Activated CD4-positive, alpha-beta T cell treated with anti-CD3 and anti-CD28 coated beads for 36 hours (primary cell): ENCODE measurements at regions of chr22 and their contacts with region 1.

Region 1: DNA sequence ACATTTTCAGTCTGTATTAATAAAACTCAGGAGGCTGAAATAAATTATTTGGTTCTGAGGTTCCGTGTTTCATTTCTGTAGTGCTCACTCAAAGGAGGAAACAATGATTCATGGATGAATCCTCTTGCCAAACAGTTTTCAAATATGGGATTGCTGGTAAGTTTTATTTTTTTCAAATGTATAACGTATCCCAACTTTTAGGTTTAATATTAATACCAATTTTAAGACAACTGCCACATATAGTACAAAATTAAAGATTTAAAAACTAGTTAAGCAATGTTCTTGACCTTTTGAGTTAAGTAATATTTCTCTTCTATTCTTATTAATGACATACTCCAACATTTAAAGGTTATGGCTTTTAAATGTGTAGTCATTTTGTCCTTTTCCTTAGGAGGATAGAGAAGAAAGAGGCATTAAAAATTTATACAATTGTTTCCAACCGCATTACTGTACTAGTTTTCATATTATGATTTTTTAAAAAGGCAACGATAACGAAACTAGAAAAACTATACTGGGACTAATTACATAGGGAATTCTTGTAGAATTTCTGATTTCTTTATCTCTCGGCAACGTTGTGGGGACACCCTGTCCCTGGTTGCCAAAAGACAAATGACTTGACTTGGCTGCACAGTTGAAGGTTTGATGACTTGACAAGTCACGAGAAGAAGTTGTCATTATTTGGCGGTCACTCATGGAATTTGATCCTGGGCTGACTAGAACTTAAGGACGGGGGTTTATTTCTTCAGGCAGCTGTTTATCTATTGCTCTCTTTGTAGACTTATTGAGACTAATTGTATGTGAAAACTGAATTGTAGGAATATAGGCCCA is 69.1 kb upstream of the ADSL start:
- DNase-seq: no peak
- ATAC-seq: peak; percentile 31
- H3K4me3 Mint-ChIP-seq: no peak overlapping the region
- H3K27ac Mint-ChIP-seq: peak overlapping the region; percentile 68
- H3K4me1 Mint-ChIP-seq: peaks cover 47% of the 10 kb centered on the region
- H3K27me3 Mint-ChIP-seq: no peaks in the 10 kb centered on the region

Region 2: DNA sequence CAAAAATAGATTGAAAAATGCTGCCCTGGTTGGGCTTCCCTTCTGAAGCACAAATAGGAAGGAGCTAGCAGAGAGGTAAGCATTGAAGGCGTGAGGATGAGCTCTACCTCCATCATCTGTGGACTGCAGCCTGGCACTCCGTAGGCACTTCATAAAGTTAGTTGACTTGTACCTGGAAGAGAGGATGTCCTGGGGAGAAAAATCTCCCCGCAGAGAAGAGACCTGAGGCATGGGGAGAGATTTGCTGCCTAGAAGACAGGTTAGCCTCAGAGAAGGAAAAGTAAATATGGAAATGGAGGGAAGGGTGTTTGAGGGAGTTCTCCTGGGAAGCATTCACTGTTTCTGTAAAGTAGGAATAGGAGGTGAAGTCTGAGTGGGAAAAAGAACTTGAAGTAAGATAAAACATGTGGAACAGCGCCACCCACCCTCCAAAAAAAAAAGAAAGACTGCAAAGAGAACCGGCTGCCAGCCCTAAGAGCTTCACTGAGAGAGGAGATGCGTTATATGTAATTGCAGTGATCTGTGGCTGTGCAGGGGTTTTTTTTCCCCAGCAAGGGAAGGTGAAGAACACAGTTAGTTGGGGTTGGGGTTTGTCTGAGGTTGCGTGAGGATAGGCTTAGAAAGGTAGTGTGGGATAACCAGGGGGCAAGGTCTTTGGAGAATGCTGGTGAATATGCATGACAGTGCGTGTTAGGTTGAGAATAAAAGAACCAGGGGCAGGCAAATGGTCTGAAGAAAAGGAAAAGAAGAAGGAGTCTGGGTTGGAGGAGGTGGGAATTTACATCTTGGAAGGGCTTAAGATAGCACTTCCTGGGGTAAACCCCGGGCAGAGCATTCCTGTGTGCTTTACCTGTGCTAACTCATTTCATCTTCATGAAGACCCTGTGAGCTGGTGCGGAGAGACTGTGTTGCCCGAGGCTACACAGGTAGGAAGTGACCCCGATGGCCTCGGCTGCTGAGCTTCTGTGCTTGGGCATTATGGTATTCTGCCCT is 83.5 kb before region 1 on chr22:
- CTCF ChIA-PET with region 1: interaction called, 3 read pairs
- POLR2A ChIA-PET with region 1: no interaction called
- intact Hi-C with region 1: loop called in 1 of 2 experiments (anchors 1 kb)
- DNase-seq: no peak
- ATAC-seq: no peak
- H3K4me3 Mint-ChIP-seq: no peak overlapping the region
- H3K27ac Mint-ChIP-seq: peak overlapping the region; percentile 72
- H3K4me1 Mint-ChIP-seq: peaks cover 86% of the 10 kb centered on the region
- H3K27me3 Mint-ChIP-seq: no peaks in the 10 kb centered on the region

Region 3: DNA sequence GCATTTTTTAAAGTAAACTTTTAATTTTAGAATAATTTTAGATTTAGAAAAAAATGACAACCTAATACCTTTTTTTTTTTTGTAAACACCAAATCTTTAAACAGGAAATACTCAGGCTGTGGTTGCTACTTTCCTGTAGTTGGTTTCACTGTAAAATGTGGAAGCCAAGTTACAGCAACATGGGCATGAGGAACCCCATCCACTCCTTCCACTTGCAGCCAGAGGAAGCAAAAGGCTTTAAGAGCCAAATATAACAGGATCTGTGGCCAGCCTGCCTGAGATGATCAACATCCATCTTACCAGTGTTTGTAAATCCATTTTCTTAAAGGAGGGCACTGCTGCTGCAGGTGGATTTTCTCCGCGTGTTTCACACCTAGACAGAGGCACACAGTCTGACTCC is 33.3 kb before region 1 on chr22:
- CTCF ChIA-PET with region 1: interaction called, 3 read pairs
- POLR2A ChIA-PET with region 1: no interaction called
- intact Hi-C with region 1: loop called in 1 of 2 experiments (anchors 5 kb)
- DNase-seq: no peak
- ATAC-seq: no peak
- H3K4me3 Mint-ChIP-seq: no peak overlapping the region
- H3K27ac Mint-ChIP-seq: peak overlapping the region; percentile 59
- H3K4me1 Mint-ChIP-seq: peaks cover 78% of the 10 kb centered on the region
- H3K27me3 Mint-ChIP-seq: no peaks in the 10 kb centered on the region

Region 4: DNA sequence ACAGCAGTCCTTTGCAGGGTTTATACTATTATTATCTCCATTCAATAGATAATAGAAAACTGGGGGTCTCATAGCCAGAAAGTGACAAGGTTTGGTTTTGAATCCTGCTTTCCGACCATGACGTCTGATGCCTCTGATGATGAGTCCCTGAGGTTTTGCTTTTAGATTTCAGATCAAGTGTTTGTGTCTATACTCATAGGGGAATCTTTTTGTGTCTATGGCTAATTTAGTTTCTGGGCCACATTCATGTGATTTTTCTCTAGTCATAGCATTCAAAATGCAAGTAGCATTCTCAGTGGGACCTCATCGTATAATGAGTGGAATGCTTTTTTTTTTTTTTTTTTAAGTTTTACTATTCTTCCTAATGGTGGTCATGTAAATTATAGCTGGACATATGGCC is 26.6 kb before region 1 on chr22:
- CTCF ChIA-PET with region 1: no interaction called
- POLR2A ChIA-PET with region 1: interaction called, 13 read pairs
- intact Hi-C with region 1: loop called in 1 of 2 experiments (anchors 1 kb)
- DNase-seq: peak; percentile 66
- ATAC-seq: peak; percentile 86
- H3K4me3 Mint-ChIP-seq: no peak overlapping the region
- H3K27ac Mint-ChIP-seq: peak overlapping the region; percentile 69
- H3K4me1 Mint-ChIP-seq: peaks cover 71% of the 10 kb centered on the region
- H3K27me3 Mint-ChIP-seq: no peaks in the 10 kb centered on the region

Region 5: DNA sequence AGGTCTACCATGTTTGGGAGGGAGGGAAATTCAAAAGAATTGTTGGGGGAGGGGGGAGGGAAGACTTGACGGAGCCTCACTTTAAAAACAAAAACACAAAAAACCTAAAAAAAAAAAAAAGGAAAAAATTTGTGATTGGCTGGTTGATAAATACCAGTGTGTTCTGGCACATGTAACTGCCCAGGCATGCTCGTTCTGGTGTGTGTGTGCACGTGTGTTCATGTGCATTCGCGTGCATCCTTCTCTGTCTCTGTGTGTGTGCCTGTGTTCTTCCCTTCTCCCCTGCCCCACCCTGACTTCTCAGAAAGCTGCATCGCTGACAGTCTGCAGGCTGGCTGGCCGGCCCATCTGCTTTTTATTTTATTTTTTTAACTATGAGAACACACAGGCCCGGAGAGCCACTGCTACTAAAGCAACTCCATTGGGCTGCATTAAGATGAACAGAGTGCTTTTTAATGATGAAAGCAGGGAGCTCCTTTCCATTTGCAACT is 46.5 kb after region 1 on chr22:
- CTCF ChIA-PET with region 1: no interaction called
- POLR2A ChIA-PET with region 1: no interaction called
- intact Hi-C with region 1: loop called in 1 of 2 experiments (anchors 2 kb)
- DNase-seq: peak; percentile 55
- ATAC-seq: no peak
- H3K4me3 Mint-ChIP-seq: peak overlapping the region; percentile 63
- H3K27ac Mint-ChIP-seq: peak overlapping the region; percentile 95
- H3K4me1 Mint-ChIP-seq: peaks cover 89% of the 10 kb centered on the region
- H3K27me3 Mint-ChIP-seq: no peaks in the 10 kb centered on the region

Region 6: DNA sequence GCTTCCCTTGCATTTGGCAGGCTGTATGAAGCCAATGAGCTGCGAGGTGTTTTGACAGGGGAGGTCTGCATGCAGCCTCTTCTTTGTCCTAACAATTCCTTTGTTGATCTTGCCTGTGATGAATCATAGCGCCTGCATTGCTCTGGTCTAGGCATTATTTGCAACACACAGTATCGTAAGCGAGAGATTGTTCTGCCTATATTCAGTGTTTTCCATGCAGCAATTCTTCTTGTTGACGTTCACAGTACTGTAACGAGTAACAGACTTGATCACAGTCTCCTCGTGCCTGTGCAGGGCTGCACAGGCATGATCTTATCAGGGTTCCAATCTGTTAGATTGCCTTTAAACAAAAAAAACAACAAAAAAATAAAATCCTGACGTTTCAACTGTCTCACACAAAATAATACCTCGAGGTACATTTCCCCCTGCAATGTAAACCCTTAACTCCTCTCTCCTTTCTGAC is 55.1 kb after region 1 on chr22:
- CTCF ChIA-PET with region 1: interaction called, 3 read pairs
- POLR2A ChIA-PET with region 1: no interaction called
- intact Hi-C with region 1: loop called in 1 of 2 experiments (anchors 2 kb)
- DNase-seq: peak; percentile 37
- ATAC-seq: peak; percentile 55
- H3K4me3 Mint-ChIP-seq: peak overlapping the region; percentile 59
- H3K27ac Mint-ChIP-seq: peak overlapping the region; percentile 84
- H3K4me1 Mint-ChIP-seq: peaks cover 90% of the 10 kb centered on the region
- H3K27me3 Mint-ChIP-seq: no peaks in the 10 kb centered on the region

Region 7: DNA sequence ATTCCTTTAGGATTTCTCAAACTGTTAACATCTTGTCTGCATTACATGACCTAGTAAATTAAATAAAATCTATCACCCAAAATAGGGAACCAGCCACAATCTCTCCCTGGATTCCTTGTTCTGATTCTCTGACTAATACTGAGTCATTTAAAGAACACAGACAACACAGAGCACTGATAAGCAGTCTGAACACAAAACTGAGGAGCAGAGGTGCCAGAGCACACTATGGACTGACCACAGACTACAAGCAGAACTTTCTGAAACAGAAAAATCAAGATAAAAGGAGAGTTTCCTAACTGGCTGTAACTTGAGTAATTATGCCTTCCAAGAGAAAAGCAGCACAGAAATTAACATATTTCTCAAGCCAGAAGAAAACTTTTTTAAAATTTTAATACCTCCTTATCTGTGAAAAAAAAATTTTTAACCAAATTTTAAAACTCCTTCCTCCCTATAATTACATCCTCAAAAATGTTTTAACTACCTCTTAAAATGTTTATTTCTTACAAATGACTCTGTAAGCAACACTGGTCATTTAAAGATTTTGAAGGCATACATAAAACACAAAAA is 222.1 kb after region 1 on chr22:
- CTCF ChIA-PET with region 1: no interaction called
- POLR2A ChIA-PET with region 1: no interaction called
- intact Hi-C with region 1: no loop called
- DNase-seq: no peak
- ATAC-seq: peak; percentile 73
- H3K4me3 Mint-ChIP-seq: no peak overlapping the region
- H3K27ac Mint-ChIP-seq: no peak overlapping the region
- H3K4me1 Mint-ChIP-seq: peaks cover 35% of the 10 kb centered on the region
- H3K27me3 Mint-ChIP-seq: no peaks in the 10 kb centered on the region

Region 8: GRCh38 chr22:40838486-40838885 is 561.3 kb after region 1 on chr22:
- CTCF ChIA-PET with region 1: no interaction called
- POLR2A ChIA-PET with region 1: no interaction called
- intact Hi-C with region 1: no loop called
- DNase-seq: no peak
- ATAC-seq: no peak
- H3K4me3 Mint-ChIP-seq: no peak overlapping the region
- H3K27ac Mint-ChIP-seq: no peak overlapping the region
- H3K4me1 Mint-ChIP-seq: peaks cover 19% of the 10 kb centered on the region
- H3K27me3 Mint-ChIP-seq: no peaks in the 10 kb centered on the region